CD4-positive, alpha-beta T cell (primary cell): ENCODE measurements at regions of chr6 and their contacts with region 1.

Region 1: DNA sequence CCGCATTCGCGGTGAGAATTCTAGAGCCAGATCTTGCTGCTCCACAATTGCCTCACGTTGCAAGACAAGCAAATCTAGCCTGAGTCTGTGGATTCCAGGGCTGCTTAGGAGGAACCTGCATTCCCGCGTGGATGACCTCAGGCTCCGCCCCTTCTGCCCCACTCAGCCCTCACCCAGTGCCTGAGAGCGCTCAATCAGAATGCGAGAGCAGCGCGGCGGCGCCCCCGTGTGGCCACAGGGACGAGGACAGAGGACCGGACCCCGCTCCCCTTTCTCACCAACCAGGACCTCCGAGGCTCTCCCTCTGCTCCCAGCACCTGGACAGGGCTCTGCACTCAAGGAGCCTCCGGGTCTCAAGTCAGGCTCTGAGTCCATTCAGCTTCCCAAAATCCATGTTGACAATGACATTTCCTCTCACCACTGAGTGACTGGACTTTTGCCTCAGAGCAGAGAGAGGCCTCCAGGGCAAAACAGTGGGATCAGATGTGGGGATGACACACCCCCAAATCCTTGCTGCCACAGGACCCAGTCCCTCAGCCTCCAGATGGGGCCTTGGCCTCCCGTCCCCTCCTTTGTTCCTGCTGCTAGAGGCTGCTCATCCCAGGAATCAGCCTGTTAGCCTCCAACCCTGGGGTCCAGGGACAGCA is 52.0 kb downstream of the RPP21 start:
- DNase-seq: peak; percentile 76 to 92 (median 83)
- ATAC-seq: peak; percentile 99
- H3K4me3 ChIP-seq: no peak overlapping the region
- H3K4me3 Mint-ChIP-seq: no peak overlapping the region
- H3K27ac ChIP-seq: no peak overlapping the region
- H3K27ac Mint-ChIP-seq: no peak overlapping the region
- H3K4me1 ChIP-seq: peaks cover 7% of the 10 kb centered on the region
- H3K4me1 Mint-ChIP-seq: no peaks in the 10 kb centered on the region
- H3K27me3 ChIP-seq: peaks cover 18 to 20% of the 10 kb centered on the region in 2 experiments
- H3K27me3 Mint-ChIP-seq: peaks cover 51% of the 10 kb centered on the region
- CTCF ChIP-seq: peak; percentile 94

Region 2: GRCh38 chr6:30219244-30219643 is 177.7 kb before region 1 on chr6:
- CTCF ChIA-PET with region 1: interaction called, 8 read pairs
- POLR2A ChIA-PET with region 1: interaction called, 5 read pairs
- intact Hi-C with region 1: loop called (anchors 1 kb)
- DNase-seq: peak in 13 of 14 experiments; percentile 29 to 78 (median 38)
- ATAC-seq: peak; percentile 73
- H3K4me3 ChIP-seq: no peak overlapping the region
- H3K4me3 Mint-ChIP-seq: no peak overlapping the region
- H3K27ac ChIP-seq: no peak overlapping the region
- H3K27ac Mint-ChIP-seq: peak overlapping the region; percentile 18
- H3K4me1 ChIP-seq: peaks cover 8% of the 10 kb centered on the region
- H3K4me1 Mint-ChIP-seq: peaks cover 18% of the 10 kb centered on the region
- H3K27me3 ChIP-seq: no peaks in the 10 kb centered on the region
- H3K27me3 Mint-ChIP-seq: no peaks in the 10 kb centered on the region
- CTCF ChIP-seq: peak; percentile 91

Region 3: GRCh38 chr6:30238174-30238795 is 158.7 kb before region 1 on chr6:
- CTCF ChIA-PET with region 1: interaction called, 6 read pairs
- POLR2A ChIA-PET with region 1: no interaction called
- intact Hi-C with region 1: loop called (anchors 1 kb)
- DNase-seq: peak in 6 of 14 experiments; percentile 14 to 67 (median 34)
- ATAC-seq: no peak
- H3K4me3 ChIP-seq: no peak overlapping the region
- H3K4me3 Mint-ChIP-seq: no peak overlapping the region
- H3K27ac ChIP-seq: no peak overlapping the region
- H3K27ac Mint-ChIP-seq: no peak overlapping the region
- H3K4me1 ChIP-seq: no peaks in the 10 kb centered on the region
- H3K4me1 Mint-ChIP-seq: no peaks in the 10 kb centered on the region
- H3K27me3 ChIP-seq: peaks cover 0 to 3% of the 10 kb centered on the region in 2 experiments
- H3K27me3 Mint-ChIP-seq: peaks cover 34% of the 10 kb centered on the region
- CTCF ChIP-seq: peak; percentile 41

Region 4: GRCh38 chr6:30357678-30358540 is 39.0 kb before region 1 on chr6:
- CTCF ChIA-PET with region 1: interaction called, 4 read pairs
- POLR2A ChIA-PET with region 1: no interaction called
- intact Hi-C with region 1: loop called (anchors 1 kb)
- DNase-seq: peak; percentile 19 to 82 (median 44)
- ATAC-seq: peak; percentile 94
- H3K4me3 ChIP-seq: peak overlapping the region; percentile 49
- H3K4me3 Mint-ChIP-seq: peak overlapping the region; percentile 63
- H3K27ac ChIP-seq: no peak overlapping the region
- H3K27ac Mint-ChIP-seq: no peak overlapping the region
- H3K4me1 ChIP-seq: peaks cover 7% of the 10 kb centered on the region
- H3K4me1 Mint-ChIP-seq: peaks cover 5% of the 10 kb centered on the region
- H3K27me3 ChIP-seq: peaks cover 25 to 58% of the 10 kb centered on the region in 2 experiments
- H3K27me3 Mint-ChIP-seq: peaks cover 66% of the 10 kb centered on the region
- CTCF ChIP-seq: peak; percentile 80